Breast epithelium (tissue), 4 donors: ENCODE measurements at regions of chr4 and their contacts with region 1.

Region 1: GRCh38 chr4:71614626-71615025 is 169.3 kb downstream of the GC start:
- DNase-seq: no peak
- H3K4me3 ChIP-seq: no peak overlapping the region
- H3K27ac ChIP-seq: no peak overlapping the region
- H3K4me1 ChIP-seq: no peaks in the 10 kb centered on the region
- H3K27me3 ChIP-seq: no peaks in the 10 kb centered on the region
- CTCF ChIP-seq: no peak
- POLR2A ChIP-seq: no peak

Region 2: DNA sequence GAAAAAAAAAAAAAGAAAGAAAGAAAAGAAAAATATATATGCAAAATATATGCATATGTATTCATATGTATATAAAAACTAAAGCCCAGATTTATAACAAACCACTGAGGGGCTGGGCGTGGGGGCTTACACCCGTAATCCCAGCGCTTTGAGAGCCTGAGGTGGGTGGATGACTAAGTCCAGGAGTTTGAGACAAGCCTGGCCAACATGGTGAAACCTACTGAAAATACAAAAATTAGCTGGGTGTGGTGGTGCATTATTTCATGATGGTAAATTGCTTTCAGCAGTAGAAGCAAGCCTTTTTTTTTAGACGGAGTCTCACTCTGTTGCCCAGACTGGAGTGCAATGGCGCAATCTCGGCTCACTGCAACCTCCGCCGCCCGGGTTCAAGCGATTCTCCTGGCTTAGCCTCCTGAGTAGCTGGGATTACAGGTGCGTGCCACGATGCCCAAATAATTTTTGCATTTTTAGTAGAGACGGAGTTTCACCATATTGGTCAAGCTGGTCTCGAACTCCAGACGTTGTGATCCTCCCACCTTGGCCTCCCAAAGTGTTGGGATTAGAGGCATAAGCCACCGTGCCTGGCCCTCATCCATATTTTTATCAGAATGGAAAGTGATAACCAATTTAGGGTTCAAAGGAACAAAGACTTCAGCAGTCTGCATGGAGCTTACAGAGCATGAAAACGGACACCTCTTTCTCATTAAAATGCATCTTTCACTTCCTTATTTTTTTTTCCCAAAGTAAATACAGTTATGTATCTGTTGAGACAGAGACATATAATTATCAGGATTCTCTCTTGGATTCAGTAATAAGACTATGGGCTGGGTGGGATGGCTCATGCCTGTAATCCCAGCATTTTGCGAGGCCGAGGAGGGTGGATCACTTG is 740.1 kb before region 1 on chr4:
- intact Hi-C with region 1: loop called (anchors 5 kb)
- DNase-seq: no peak
- H3K4me3 ChIP-seq: no peak overlapping the region
- H3K27ac ChIP-seq: no peak overlapping the region
- H3K4me1 ChIP-seq: no peaks in the 10 kb centered on the region
- H3K27me3 ChIP-seq: no peaks in the 10 kb centered on the region
- CTCF ChIP-seq: no peak
- POLR2A ChIP-seq: no peak